Caco-2 (cell line): ENCODE measurements at regions of chr2 and their contacts with region 1.

Region 1: DNA sequence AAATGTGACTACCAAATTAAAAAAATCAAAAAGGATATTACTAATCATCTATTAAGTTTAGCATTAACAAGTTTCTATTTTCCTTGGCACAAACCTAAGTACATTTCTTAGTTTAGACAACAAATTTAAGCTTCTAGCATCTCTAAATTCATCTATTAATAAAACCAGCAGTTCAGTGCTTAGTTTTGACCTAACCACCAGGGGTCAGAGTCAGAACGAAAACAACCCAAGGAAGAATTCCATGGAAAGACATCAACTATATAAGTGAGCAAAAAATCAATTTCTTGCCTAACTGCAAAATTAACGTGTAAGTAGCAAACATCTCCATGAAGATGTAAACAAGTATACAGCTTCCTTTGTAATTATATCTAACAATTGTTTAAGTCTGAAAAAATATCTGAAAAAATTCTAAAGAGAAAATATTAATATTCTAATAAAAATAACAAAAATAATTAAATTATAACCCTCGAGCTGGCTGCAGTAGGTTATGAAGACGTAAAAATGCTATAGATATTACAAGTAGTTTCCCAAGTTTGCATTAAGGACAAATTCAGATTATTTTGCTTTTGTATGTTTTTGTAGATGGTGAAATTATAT is 83.7 kb downstream of the CERKL start:
- DNase-seq: peak in 1 of 2 experiments; percentile 49
- H3K4me3 ChIP-seq: no peak overlapping the region
- H3K4me3 Mint-ChIP-seq: no peak overlapping the region
- H3K27ac Mint-ChIP-seq: no peak overlapping the region
- H3K4me1 ChIP-seq: no peaks in the 10 kb centered on the region
- H3K4me1 Mint-ChIP-seq: no peaks in the 10 kb centered on the region
- H3K27me3 ChIP-seq: no peaks in the 10 kb centered on the region
- H3K27me3 Mint-ChIP-seq: peaks cover 4% of the 10 kb centered on the region
- CTCF ChIP-seq: peak in 1 of 2 experiments; percentile 63

Region 2: DNA sequence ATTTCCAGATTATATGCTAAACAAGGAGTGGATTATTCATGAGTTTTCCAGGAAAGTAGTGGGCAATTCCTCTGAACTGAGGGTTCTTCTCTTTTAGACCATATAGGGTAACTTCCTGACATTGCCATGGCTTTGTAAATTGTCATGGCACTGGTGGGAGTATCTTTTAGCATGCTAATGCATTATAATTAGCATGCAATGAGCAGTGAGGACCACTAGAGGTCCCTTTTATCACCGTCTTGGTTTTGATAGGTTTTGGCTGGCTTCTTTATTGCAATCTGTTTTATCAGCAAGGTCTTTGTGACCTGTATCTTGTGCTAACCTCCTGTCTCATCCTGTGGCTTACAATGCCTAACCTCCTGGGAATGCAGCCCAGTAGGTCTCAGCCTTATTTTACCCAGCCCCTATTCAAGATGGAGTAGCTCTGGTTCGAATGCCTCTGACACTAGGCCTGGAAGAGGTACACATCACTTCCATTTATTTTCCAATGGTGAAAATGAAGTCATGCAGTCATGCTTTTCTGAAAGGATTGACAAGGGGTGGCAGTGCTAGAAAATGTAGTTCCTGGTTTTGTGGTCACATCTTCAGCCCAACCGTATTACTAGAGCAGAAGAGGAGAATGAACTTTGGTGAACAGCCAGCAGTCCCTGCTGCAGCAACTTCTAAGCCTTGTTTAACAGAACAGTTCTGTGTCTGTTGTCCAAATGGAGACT is 142.7 kb before region 1 on chr2:
- CTCF ChIA-PET with region 1: no interaction called
- POLR2A ChIA-PET with region 1: no interaction called
- intact Hi-C with region 1: no loop called
- DNase-seq: no peak
- H3K4me3 ChIP-seq: no peak overlapping the region
- H3K4me3 Mint-ChIP-seq: no peak overlapping the region
- H3K27ac Mint-ChIP-seq: no peak overlapping the region
- H3K4me1 ChIP-seq: no peaks in the 10 kb centered on the region
- H3K4me1 Mint-ChIP-seq: no peaks in the 10 kb centered on the region
- H3K27me3 ChIP-seq: no peaks in the 10 kb centered on the region
- H3K27me3 Mint-ChIP-seq: no peaks in the 10 kb centered on the region
- CTCF ChIP-seq: peak in 1 of 2 experiments; percentile 15

Region 3: DNA sequence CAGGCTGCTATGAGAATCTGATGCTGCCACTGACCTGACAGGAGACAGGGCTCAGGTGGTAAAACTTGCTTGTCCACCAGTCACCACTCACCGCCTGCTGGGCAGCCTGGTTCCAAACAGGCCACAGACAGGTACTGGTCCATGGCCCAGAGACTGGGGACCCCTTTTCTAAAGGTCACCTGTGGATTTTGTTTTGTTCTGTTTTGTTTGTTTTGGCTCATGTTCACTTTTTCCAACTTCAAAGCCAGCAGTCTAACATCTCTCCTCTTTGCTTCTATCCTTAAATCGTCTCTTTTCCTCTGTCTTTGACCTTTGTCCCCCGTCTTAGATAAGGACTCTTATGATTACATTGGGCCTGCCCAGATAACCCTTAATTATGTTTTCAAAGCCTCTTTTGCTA is 86.9 kb after region 1 on chr2:
- CTCF ChIA-PET with region 1: no interaction called
- POLR2A ChIA-PET with region 1: no interaction called
- intact Hi-C with region 1: loop called (anchors 2 kb)
- DNase-seq: peak; percentile 63 to 66
- H3K4me3 ChIP-seq: no peak overlapping the region
- H3K4me3 Mint-ChIP-seq: no peak overlapping the region
- H3K27ac Mint-ChIP-seq: no peak overlapping the region
- H3K4me1 ChIP-seq: peaks cover 12% of the 10 kb centered on the region
- H3K4me1 Mint-ChIP-seq: peaks cover 20% of the 10 kb centered on the region
- H3K27me3 ChIP-seq: no peaks in the 10 kb centered on the region
- H3K27me3 Mint-ChIP-seq: no peaks in the 10 kb centered on the region
- CTCF ChIP-seq: no peak

Region 4: DNA sequence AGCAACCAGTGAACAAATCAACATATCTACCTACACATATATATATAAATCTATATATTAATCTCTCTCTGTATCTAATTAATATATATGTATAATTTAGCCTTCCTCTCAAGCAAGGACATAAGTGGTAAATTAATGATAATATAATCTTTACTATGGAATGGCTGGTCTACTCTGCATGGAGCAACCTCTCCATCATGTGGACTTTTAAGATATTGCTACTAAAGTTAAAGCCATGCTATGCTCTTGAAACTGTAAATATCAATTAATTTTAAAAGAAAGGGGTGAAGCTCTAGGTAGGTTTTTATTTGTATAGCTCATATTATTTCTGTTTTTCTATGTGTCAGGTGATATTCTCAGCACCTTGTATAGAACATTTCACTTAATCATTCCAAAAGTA is 559.4 kb after region 1 on chr2:
- CTCF ChIA-PET with region 1: no interaction called
- POLR2A ChIA-PET with region 1: no interaction called
- intact Hi-C with region 1: loop called (anchors 10 kb)
- DNase-seq: no peak
- H3K4me3 ChIP-seq: no peak overlapping the region
- H3K4me3 Mint-ChIP-seq: no peak overlapping the region
- H3K27ac Mint-ChIP-seq: no peak overlapping the region
- H3K4me1 ChIP-seq: no peaks in the 10 kb centered on the region
- H3K4me1 Mint-ChIP-seq: no peaks in the 10 kb centered on the region
- H3K27me3 ChIP-seq: no peaks in the 10 kb centered on the region
- H3K27me3 Mint-ChIP-seq: peaks cover 2% of the 10 kb centered on the region
- CTCF ChIP-seq: no peak